Activated B cell treated with CpG ODN at 0.5 μM for 24 hours (primary cell): ENCODE measurements at regions of chr16 and their contacts with region 1.

Region 1: GRCh38 chr16:67892899-67893742 is at the start of gene PSKH1:
- DNase-seq: peak; percentile 80
- ATAC-seq: peak; percentile 99
- H3K4me3 Mint-ChIP-seq: peak within 1 kb of the TSS; percentile 94
- H3K27ac Mint-ChIP-seq: peak within 1 kb of the TSS; percentile 86
- H3K4me1 Mint-ChIP-seq: peaks cover 31% of the 10 kb centered on the region
- H3K27me3 Mint-ChIP-seq: no peaks in the 10 kb centered on the region
- CTCF ChIP-seq: no peak
- total RNA-seq, gene PSKH1: 19.2 and 22.0 TPM in 2 replicates

Region 2: GRCh38 chr16:67841764-67842508 is 51.2 kb before region 1 on chr16 and contains the start of gene THAP11:
- CTCF ChIA-PET with region 1: no interaction called
- POLR2A ChIA-PET with region 1: no interaction called
- intact Hi-C with region 1: loop called (anchors 1 kb)
- DNase-seq: peak; percentile 95
- ATAC-seq: peak; percentile 54
- H3K4me3 Mint-ChIP-seq: peak within 1 kb of the TSS; percentile 95
- H3K27ac Mint-ChIP-seq: peak within 1 kb of the TSS; percentile 95
- H3K4me1 Mint-ChIP-seq: peaks cover 43% of the 10 kb centered on the region
- H3K27me3 Mint-ChIP-seq: no peaks in the 10 kb centered on the region
- CTCF ChIP-seq: peak; percentile 38
- total RNA-seq, gene THAP11: 24.2 and 24.9 TPM in 2 replicates

Region 3: GRCh38 chr16:67872786-67873537 is 20.2 kb before region 1 on chr16 and contains the start of gene EDC4:
- CTCF ChIA-PET with region 1: interaction called, 3 read pairs
- POLR2A ChIA-PET with region 1: interaction called, 4 read pairs
- intact Hi-C with region 1: loop called (anchors 2 kb)
- DNase-seq: peak; percentile 89
- ATAC-seq: peak; percentile 93
- H3K4me3 Mint-ChIP-seq: peak within 1 kb of the TSS; percentile 90
- H3K27ac Mint-ChIP-seq: peak within 1 kb of the TSS; percentile 84
- H3K4me1 Mint-ChIP-seq: peaks cover 36% of the 10 kb centered on the region
- H3K27me3 Mint-ChIP-seq: no peaks in the 10 kb centered on the region
- CTCF ChIP-seq: no peak
- total RNA-seq, gene EDC4: 71.5 TPM in 2 replicates

Region 4: GRCh38 chr16:67968400-67969253 is 75.5 kb after region 1 on chr16 and contains the start of gene SLC12A4:
- CTCF ChIA-PET with region 1: no interaction called
- POLR2A ChIA-PET with region 1: no interaction called
- intact Hi-C with region 1: loop called (anchors 2 kb)
- DNase-seq: peak; percentile 87
- ATAC-seq: peak; percentile 93
- H3K4me3 Mint-ChIP-seq: peak within 1 kb of the TSS; percentile 96
- H3K27ac Mint-ChIP-seq: peak within 1 kb of the TSS; percentile 80
- H3K4me1 Mint-ChIP-seq: peaks cover 28% of the 10 kb centered on the region
- H3K27me3 Mint-ChIP-seq: no peaks in the 10 kb centered on the region
- CTCF ChIP-seq: no peak
- total RNA-seq, gene SLC12A4: 24.6 and 37.9 TPM in 2 replicates

Region 5: GRCh38 chr16:68022704-68023522 is 129.8 kb after region 1 on chr16 and contains the starts of genes DDX28 and DUS2:
- CTCF ChIA-PET with region 1: no interaction called
- POLR2A ChIA-PET with region 1: interaction called, 3 read pairs
- intact Hi-C with region 1: loop called (anchors 1 kb)
- DNase-seq: peak; percentile 97
- ATAC-seq: peak; percentile 93
- H3K4me3 Mint-ChIP-seq: peak within 1 kb of the TSS; percentile 99
- H3K27ac Mint-ChIP-seq: peak within 1 kb of the TSS; percentile 97
- H3K4me1 Mint-ChIP-seq: peaks cover 31% of the 10 kb centered on the region
- H3K27me3 Mint-ChIP-seq: no peaks in the 10 kb centered on the region
- CTCF ChIP-seq: no peak
- total RNA-seq, gene DDX28: 19.2 and 19.7 TPM in 2 replicates
- total RNA-seq, gene DUS2: 54.2 and 62.0 TPM in 2 replicates

Region 6: DNA sequence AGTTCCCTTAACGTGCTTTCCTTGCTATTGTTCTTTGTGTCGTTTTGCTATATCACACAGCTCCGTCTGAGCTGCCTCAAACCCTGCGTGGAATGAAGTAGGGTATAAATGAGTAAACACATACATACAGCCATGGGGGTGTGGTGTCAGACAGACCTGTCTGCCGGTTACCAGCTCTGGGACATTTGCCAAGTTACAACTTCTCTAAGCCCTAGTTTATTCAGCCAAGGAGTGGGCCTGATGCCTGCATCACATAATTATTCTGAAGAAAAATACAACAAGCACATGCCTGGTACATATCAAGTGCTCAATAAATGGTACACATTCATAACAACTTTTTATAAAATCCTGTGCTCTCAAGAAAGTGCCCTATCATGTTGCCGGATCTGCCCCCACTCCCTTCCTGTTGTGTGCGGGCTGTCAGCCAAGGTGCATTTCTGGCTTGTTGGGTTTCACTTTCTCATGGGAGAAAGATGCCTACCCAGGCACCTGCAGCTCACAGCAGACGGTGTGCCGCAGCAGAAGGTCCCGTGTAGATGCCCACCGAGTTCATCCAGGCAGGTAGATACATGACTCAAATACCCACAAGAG is 524.7 kb after region 1 on chr16:
- CTCF ChIA-PET with region 1: no interaction called
- POLR2A ChIA-PET with region 1: interaction called, 12 read pairs
- intact Hi-C with region 1: no loop called
- DNase-seq: peak; percentile 29
- ATAC-seq: peak; percentile 85
- H3K4me3 Mint-ChIP-seq: peak overlapping the region; percentile 76
- H3K27ac Mint-ChIP-seq: peak overlapping the region; percentile 94
- H3K4me1 Mint-ChIP-seq: peaks cover 30% of the 10 kb centered on the region
- H3K27me3 Mint-ChIP-seq: no peaks in the 10 kb centered on the region
- CTCF ChIP-seq: no peak